SK-N-SH (cell line): ENCODE measurements at regions of chr17 and their contacts with region 1.

Region 1: DNA sequence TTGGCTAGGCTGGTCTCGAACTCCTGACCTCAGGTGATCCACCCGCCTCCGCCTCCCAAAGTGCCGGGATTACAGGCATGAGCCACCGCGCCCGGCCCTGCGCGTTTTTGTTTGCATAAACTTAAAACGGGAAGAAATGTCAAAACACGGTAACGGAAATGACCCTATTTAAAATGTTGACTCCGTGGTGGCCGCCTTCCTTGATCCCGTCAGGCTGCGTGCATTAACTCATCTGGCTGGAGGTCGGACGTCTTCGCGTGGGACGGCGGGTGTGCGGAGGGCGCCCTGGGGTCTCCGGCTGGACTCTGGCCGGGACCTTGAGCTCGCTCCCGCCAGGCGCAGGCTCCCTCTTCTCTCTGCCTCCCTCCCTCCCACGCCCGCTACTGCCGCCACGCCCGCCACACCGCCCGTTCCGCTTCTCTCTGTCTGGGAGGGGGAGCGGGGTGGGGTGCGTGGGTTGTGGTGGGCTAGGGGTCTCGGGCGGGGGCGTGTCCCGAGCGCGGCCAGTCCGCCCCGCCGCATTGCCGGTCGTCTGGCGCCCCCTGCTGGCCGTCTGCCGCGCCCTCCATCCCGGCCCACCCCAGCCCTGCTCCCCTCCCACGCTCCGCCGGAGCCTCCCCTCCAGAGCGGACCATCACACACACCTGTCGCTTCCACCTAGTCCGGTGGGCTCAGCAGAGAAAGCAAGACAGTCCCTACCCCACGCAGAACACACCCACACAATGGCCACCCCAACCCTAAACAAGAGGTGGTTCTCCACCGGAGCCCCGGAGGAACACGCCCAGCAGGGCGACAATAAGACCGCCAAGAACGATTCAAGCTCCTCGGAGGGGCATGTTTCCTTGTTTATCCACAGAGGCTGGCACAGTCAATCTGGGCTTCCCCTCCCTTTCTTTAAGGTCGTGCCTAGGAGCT is 1.2 kb upstream of the CCDC42 start:
- DNase-seq: peak; percentile 97
- H3K4me3 ChIP-seq: peak overlapping the region; percentile 52 to 70
- H3K27ac ChIP-seq: no peak overlapping the region
- H3K4me1 ChIP-seq: peaks cover 0 to 6% of the 10 kb centered on the region in 2 experiments; a peak in 1 of 4 replicates
- H3K27me3 ChIP-seq: peaks cover 6% of the 10 kb centered on the region; the same call in 1 of the 2 replicates
- CTCF ChIP-seq: peak; percentile 71
- EP300 ChIP-seq: no peak
- RAD21 ChIP-seq: peak; percentile 82

Region 2: GRCh38 chr17:8376271-8377067 is 369.4 kb before region 1 on chr17 and contains the start of gene KRABD2:
- CTCF ChIA-PET with region 1: interaction called, 11 read pairs
- POLR2A ChIA-PET with region 1: no interaction called
- DNase-seq: peak; percentile 98
- H3K4me3 ChIP-seq: peak within 1 kb of the TSS; percentile 64 to 85
- H3K27ac ChIP-seq: peak within 1 kb of the TSS; percentile 71 to 92
- H3K4me1 ChIP-seq: peaks cover 23 to 27% of the 10 kb centered on the region in 2 experiments; a peak in 3 of 4 replicates
- H3K27me3 ChIP-seq: no peaks in the 10 kb centered on the region
- CTCF ChIP-seq: peak; percentile 63
- EP300 ChIP-seq: no peak
- RAD21 ChIP-seq: no peak

Region 3: DNA sequence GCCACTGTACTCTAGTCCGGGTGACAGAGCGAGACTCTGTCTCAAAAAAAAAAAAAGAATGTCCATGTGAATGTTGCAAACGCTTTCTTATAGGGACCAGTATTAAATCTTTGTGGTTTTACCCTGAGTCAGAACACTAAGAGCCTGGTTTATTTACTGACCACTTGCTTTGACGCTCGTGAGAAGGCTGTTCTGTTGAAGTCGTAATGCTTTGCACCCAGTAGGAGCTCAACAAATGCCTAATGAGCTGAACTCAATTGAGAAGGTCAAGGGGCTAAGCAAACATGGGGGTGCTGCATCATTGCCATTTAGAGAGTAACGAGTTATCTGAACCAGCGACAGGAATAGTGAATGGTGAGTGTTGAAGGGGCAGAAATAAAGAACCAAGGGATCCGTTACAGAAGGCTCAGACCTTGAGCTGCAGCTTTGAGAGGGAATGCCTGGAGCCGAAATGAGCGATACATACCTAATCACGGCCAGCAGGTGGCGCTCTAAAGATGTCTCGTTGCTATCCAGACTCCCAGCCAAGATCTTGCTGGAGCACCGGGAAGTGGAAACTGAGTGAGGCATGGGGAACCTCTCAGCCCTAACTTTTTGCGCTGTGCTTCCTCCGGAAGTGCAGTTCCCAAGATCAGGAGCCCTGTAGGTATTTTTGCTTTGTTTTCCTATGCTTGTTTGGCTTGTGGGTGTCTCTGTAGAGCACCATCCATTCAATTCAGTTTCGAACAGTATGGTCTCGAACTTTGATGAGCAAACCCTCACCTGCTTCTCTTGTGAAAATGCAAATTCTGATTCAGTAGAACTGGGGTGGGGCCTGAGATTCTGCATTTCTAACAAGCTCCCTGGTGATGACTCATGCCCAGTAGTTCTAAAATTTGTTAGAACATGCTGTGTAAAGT is 335.6 kb before region 1 on chr17:
- CTCF ChIA-PET with region 1: interaction called, 82 read pairs
- POLR2A ChIA-PET with region 1: interaction called, 3 read pairs
- DNase-seq: peak; percentile 80
- H3K4me3 ChIP-seq: peak overlapping the region in 1 of 2 experiments; percentile 48; a peak in 1 of 4 replicates
- H3K27ac ChIP-seq: no peak overlapping the region
- H3K4me1 ChIP-seq: no peaks in the 10 kb centered on the region
- H3K27me3 ChIP-seq: peaks cover 17% of the 10 kb centered on the region; the same call in 1 of the 2 replicates
- CTCF ChIP-seq: peak; percentile 84
- EP300 ChIP-seq: no peak
- RAD21 ChIP-seq: peak; percentile 85

Region 4: GRCh38 chr17:8481116-8481518 is 264.7 kb before region 1 on chr17:
- CTCF ChIA-PET with region 1: interaction called, 13 read pairs
- POLR2A ChIA-PET with region 1: no interaction called
- DNase-seq: no peak
- H3K4me3 ChIP-seq: no peak overlapping the region
- H3K27ac ChIP-seq: no peak overlapping the region
- H3K4me1 ChIP-seq: no peaks in the 10 kb centered on the region
- H3K27me3 ChIP-seq: no peaks in the 10 kb centered on the region
- CTCF ChIP-seq: no peak
- EP300 ChIP-seq: no peak
- RAD21 ChIP-seq: no peak

Region 5: GRCh38 chr17:8681170-8681949 is 64.5 kb before region 1 on chr17:
- CTCF ChIA-PET with region 1: interaction called, 10 read pairs
- POLR2A ChIA-PET with region 1: no interaction called
- DNase-seq: peak; percentile 84
- H3K4me3 ChIP-seq: peak overlapping the region; percentile 35
- H3K27ac ChIP-seq: peak overlapping the region; percentile 73 to 93
- H3K4me1 ChIP-seq: peaks cover 0 to 13% of the 10 kb centered on the region in 2 experiments; a peak in 3 of 4 replicates
- H3K27me3 ChIP-seq: no peaks in the 10 kb centered on the region
- CTCF ChIP-seq: no peak
- EP300 ChIP-seq: peak in 1 of 2 experiments; percentile 89; a peak in 3 of 4 replicates
- RAD21 ChIP-seq: 0 out of 2 replicates have a peak, but pooled peaks have one; percentile 5

Region 6: DNA sequence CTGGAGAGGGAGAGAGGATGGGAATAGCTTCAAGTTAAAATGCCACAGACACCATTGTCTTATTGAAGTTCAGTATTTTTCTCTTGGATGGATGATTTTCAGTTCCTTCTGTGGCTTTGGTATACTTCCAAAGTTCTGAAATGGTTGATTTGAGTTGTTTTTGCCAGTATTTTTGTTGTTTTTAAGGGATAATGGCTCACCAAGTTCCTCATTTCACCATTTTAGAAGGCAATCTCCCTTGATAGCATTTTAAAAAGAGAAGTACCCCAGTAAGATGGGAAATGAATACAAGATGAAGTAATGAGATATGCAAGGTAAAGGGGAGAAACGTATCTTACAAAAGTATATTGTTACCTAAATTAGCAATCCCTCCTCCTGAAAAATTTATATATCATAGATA is 31.0 kb after region 1 on chr17:
- CTCF ChIA-PET with region 1: interaction called, 14 read pairs
- POLR2A ChIA-PET with region 1: no interaction called
- DNase-seq: no peak
- H3K4me3 ChIP-seq: no peak overlapping the region
- H3K27ac ChIP-seq: no peak overlapping the region
- H3K4me1 ChIP-seq: no peaks in the 10 kb centered on the region
- H3K27me3 ChIP-seq: peaks cover 7% of the 10 kb centered on the region; the same call in 1 of the 2 replicates
- CTCF ChIP-seq: no peak
- EP300 ChIP-seq: no peak
- RAD21 ChIP-seq: no peak